ENCODE measurements at regions of chr16 and their contacts with region 1.

Region 1: DNA sequence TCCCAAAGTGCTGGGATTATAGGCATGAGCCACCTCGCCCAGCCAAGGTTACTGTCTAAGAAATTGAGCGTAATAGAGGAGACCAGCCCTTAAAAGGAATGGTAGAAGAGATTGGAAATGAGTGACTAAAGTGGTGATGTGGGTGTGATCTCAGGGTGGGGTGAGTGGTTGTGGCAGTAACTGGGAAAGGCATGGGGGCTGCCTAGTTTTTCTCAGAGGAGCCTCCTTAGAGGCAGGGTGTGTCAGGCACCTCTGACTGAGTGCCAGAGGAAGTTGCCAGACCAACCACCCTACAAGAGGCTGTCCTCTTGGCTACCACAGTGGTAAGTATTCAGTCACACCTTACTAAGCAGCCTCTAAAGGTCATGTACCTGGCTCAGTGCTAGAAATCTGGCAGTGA is 8.9 kb downstream of the DUS2 start:
- DNase-seq: peak in 1 of 5 donors; percentile 5
- H3K4me3 ChIP-seq: no peak overlapping the region
- H3K27ac ChIP-seq: no peak overlapping the region
- H3K4me1 ChIP-seq: no peaks in the 10 kb centered on the region
- H3K27me3 ChIP-seq: no peaks in the 10 kb centered on the region
- CTCF ChIP-seq: no peak
- EP300 ChIP-seq: no peak
- POLR2A ChIP-seq: no peak

Region 2: GRCh38 chr16:67822511-67822910 is 209.4 kb before region 1 on chr16:
- intact Hi-C with region 1: loop called in 1 of 4 experiments (anchors 10 kb)
- DNase-seq: no peak
- H3K4me3 ChIP-seq: no peak overlapping the region
- H3K27ac ChIP-seq: no peak overlapping the region
- H3K4me1 ChIP-seq: no peaks in the 10 kb centered on the region
- H3K27me3 ChIP-seq: no peaks in the 10 kb centered on the region
- CTCF ChIP-seq: no peak
- EP300 ChIP-seq: no peak
- POLR2A ChIP-seq: no peak

Region 3: GRCh38 chr16:67883872-67884261 is 148.1 kb before region 1 on chr16:
- intact Hi-C with region 1: no loop called
- DNase-seq: peak; percentile 49 to 76 (median 71)
- H3K4me3 ChIP-seq: no peak overlapping the region
- H3K27ac ChIP-seq: peak overlapping the region in 1 of 2 donors; percentile 11
- H3K4me1 ChIP-seq: peaks cover 6% of the 10 kb centered on the region
- H3K27me3 ChIP-seq: no peaks in the 10 kb centered on the region
- CTCF ChIP-seq: peak; percentile 70 to 76 (median 74)
- EP300 ChIP-seq: no peak
- POLR2A ChIP-seq: no peak

Region 4: GRCh38 chr16:68046106-68046505 is 14.2 kb after region 1 on chr16:
- intact Hi-C with region 1: no loop called
- DNase-seq: peak in 1 of 5 donors; percentile 4
- H3K4me3 ChIP-seq: no peak overlapping the region
- H3K27ac ChIP-seq: no peak overlapping the region
- H3K4me1 ChIP-seq: no peaks in the 10 kb centered on the region
- H3K27me3 ChIP-seq: no peaks in the 10 kb centered on the region
- CTCF ChIP-seq: no peak
- EP300 ChIP-seq: no peak
- POLR2A ChIP-seq: no peak

Region 5: DNA sequence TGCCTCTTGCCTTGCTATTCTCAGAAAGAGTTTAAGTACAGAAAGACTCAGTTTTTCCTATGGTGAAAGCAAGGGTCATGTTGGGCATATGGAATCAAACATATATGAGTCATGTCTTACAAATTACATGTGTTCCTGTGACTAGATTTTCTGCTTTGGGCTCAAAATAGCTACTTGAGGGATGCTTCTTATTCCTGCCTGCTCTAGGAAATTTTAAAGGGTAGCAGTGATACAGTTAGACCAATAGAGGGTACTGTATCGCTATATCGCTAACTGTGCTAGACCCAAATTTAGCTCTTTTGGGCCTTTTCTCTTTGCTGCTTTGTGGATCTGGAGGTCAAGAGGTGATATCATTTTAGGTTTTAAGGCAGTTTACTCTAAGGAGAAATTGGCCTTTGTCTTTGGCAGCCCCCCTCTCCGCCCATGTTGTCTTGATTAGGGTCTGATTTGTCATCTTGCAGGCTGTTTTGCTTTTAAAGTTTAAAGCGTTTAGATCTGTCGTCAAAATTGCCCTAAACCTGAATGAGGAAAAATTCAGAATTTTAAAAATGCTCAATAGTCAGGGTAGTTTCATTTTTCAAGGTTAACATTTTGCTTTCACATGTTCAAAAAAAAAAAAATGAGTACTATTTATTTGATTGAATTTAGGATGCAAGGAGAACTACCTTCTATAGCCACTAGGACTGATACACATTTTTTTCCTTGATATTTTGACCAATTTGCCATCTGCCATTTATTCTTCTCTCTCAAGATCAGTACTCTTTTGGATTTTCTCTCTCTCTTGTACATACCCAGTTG is 62.1 kb after region 1 on chr16:
- intact Hi-C with region 1: no loop called
- DNase-seq: no peak
- H3K4me3 ChIP-seq: no peak overlapping the region
- H3K27ac ChIP-seq: no peak overlapping the region
- H3K4me1 ChIP-seq: no peaks in the 10 kb centered on the region
- H3K27me3 ChIP-seq: no peaks in the 10 kb centered on the region
- CTCF ChIP-seq: peak in 1 of 3 donors; percentile 20
- EP300 ChIP-seq: no peak
- POLR2A ChIP-seq: no peak